ENCODE measurements at regions of chr12 and their contacts with region 1.

Region 1: DNA sequence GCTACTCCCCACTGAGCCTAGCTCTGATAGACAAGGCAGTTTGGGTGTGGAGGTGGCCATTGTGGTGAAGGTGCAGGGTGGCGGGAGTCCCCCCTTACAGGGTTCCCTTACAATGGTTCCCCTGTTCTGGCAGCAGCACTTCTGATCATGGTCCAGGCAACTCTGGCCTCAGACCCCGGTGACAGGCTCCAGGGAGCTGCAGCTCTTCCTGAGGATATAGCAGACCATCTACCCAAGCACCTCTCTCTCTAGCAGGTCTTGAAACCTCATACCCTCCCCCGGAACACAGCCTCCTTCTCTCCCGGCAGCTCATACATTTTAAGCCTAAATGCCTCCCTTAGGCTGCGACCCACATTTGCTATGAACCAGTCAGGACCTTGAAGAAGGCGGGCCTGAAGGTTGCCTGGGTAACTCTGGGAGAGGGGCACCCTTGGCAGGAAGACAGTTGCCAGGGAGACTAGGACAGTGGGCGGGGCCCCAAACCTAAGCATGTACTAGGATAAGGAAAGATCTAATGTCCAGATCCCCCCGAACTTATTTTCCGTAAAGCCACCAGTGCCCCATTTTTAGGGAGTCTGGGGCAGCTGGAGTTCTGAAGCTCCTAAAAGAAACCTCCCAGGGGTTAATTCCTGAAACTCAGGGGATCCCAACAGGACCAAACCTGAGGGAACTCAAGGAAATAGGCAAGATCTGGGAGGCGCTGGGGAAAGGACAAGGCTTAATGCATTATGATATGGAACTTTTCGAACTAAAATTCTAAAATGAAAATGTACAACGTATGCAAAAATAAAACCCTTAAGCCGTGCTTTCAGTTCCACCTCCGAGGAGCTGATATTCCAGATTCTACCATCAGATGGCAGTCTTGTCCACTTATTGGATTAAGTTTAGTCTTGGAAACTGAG is 4.5 kb upstream of the GDF11 start:
- DNase-seq: peak; percentile 82

Region 2: DNA sequence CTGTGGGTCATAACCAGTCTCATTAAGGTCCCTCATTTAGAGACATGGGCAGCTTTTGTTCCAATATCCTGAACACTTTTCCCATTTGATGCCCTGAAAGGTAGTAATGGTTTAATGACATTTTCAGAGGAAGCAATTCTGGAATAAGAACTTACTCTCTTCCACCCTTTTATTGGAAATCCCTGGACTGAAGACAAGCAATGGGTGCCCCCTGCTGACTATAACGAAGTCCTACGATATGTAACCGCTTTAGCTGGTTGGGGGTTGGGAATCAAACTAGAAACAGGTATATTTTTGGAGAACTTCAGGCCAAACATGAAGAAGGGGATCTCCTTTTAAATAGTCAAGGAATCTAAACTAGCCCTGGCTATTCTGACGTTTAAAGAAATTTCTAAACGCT is 58.7 kb after region 1 on chr12:
- intact Hi-C with region 1: loop called (anchors 2 kb)
- DNase-seq: no peak

Region 3: DNA sequence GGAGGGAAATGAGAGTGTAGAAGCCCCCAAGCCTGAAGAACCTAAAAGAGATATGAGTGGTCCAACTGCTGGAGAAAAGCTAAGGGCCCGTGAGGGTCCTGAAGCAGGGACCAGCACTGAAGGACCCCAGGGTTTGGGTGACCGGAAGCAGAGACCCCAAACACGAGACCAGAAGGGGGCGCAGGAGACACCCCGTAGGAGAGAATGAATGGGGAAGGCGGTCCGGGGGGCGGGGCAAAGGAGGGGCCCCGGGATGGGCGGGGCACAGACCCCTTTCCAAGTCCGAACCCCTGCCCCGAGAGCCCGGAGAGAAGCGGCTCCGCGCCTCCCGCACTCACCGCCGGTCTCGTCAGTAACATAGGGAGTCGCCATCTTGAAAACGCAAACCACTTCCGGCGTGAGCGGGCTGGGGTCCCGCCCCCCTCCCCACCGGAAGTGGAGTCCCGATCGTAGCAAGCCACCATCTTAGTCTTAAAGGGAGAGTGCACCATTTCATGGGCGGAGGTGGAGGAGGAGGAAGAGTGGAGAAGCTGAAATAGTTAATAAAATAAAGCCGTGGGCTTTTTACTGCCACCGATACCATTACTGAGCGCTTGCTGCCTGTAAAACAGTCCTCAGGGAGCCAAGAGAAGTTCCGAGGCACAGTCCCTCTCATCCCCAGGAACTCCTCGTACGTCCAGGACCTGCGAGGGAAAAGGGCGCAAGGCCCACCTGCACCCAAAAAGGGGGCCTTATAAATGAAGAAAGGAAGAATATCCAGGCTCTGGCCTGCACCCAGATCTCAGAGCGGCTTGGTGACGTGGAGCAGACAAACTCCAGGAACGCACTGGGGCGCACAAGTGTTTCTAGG is 188.6 kb after region 1 on chr12:
- intact Hi-C with region 1: loop called (anchors 5 kb)
- DNase-seq: peak; percentile 94

Region 4: GRCh38 chr12:55940065-55940732 is 201.8 kb after region 1 on chr12:
- intact Hi-C with region 1: loop called (anchors 2 kb)
- DNase-seq: peak; percentile 91

Region 5: GRCh38 chr12:56041552-56042429 is 303.4 kb after region 1 on chr12 and contains the start of gene RPS26:
- intact Hi-C with region 1: loop called (anchors 10 kb)
- DNase-seq: peak; percentile 96
- total RNA-seq, gene RPS26: 39.5 TPM

Measured in cardiac septum (tissue), 1 donor.